Esophagus muscularis mucosa (tissue), 4 donors: ENCODE measurements at regions of chr14 and their contacts with region 1.

Region 1: DNA sequence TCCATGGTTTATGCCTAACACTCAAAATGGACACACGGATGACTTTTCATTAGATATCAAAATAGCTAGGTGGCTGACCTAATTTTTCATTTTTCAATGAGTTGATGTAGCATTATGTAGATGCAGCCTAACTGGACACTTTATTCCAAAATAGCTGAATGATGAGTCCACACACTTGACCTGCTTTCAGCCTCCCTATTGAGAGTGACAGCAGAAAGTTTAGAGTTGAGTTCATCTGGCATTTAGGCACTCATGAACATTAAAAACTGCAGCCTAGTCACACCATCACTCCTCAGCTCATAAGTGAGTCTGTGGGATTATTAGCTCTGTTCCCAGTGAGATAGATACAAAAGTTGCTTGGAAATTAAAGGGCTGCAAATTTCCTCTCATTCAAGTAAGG is 307.3 kb upstream of the PRKD1 start:
- DNase-seq: no peak
- H3K4me3 ChIP-seq: no peak overlapping the region
- H3K27ac ChIP-seq: no peak overlapping the region
- H3K4me1 ChIP-seq: no peaks in the 10 kb centered on the region
- H3K27me3 ChIP-seq: no peaks in the 10 kb centered on the region
- CTCF ChIP-seq: no peak
- EP300 ChIP-seq: no peak
- POLR2A ChIP-seq: no peak

Region 2: GRCh38 chr14:30270200-30271161 is 35.5 kb after region 1 on chr14:
- intact Hi-C with region 1: loop called (anchors 5 kb)
- DNase-seq: peak; percentile 94
- H3K4me3 ChIP-seq: peak overlapping the region in 3 of 4 donors; percentile 30 to 46 (median 32)
- H3K27ac ChIP-seq: peak overlapping the region in 1 of 4 donors; percentile 31
- H3K4me1 ChIP-seq: peaks cover 0 to 27% (median 18%) of the 10 kb centered on the region in 4 donors
- H3K27me3 ChIP-seq: no peaks in the 10 kb centered on the region
- CTCF ChIP-seq: peak; percentile 69 to 89 (median 74)
- EP300 ChIP-seq: no peak
- POLR2A ChIP-seq: no peak

Region 3: GRCh38 chr14:30427401-30427800 is 192.4 kb after region 1 on chr14:
- intact Hi-C with region 1: no loop called
- DNase-seq: no peak
- H3K4me3 ChIP-seq: no peak overlapping the region
- H3K27ac ChIP-seq: no peak overlapping the region
- H3K4me1 ChIP-seq: no peaks in the 10 kb centered on the region
- H3K27me3 ChIP-seq: no peaks in the 10 kb centered on the region
- CTCF ChIP-seq: no peak
- EP300 ChIP-seq: no peak
- POLR2A ChIP-seq: no peak